ENCODE measurements at regions of chr22 and their contacts with region 1.

Region 1: DNA sequence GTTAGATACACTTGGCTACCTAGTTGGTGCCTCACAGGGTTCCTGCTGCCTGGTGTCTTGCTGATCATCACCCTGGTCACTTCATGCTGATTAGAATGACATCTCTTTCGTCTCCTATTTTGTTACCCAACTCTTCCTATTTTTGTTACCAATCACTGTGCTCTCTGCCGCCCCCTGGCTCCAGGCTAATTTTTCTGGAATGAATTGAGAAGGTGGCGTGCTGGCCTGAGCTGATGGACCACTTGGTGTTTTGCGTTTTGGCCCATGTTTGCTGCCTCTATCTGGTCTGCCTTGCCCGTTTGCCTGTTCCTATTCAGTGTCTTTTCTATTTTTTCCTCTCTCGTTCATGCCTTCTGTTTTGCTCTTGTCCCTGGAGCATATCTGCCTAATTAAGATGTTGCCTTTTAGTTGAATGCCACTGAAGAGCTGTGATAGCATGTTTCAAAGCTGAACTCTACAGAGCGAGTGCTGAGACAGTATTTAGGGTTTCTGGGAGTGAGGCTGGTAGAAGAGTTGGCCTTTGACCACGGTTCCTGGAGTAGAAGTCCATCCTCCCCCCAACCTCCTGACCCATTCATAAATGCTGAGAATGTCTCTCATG is 5.9 kb upstream of the ATF4 start:
- DNase-seq: peak in 2 of 5 donors; percentile 42 to 65
- H3K4me3 ChIP-seq: no peak overlapping the region
- H3K4me3 Mint-ChIP-seq: peak overlapping the region in 1 of 7 donors; percentile 4
- H3K27ac ChIP-seq: no peak overlapping the region
- H3K27ac Mint-ChIP-seq: peak overlapping the region in 4 of 8 donors; percentile 25 to 58 (median 37)
- H3K4me1 ChIP-seq: peaks cover 7% of the 10 kb centered on the region
- H3K4me1 Mint-ChIP-seq: peaks cover 17 to 26% (median 21%) of the 10 kb centered on the region in 3 donors
- H3K27me3 ChIP-seq: no peaks in the 10 kb centered on the region
- H3K27me3 Mint-ChIP-seq: peaks cover 0 to 2% of the 10 kb centered on the region in 2 donors

Region 2: GRCh38 chr22:39496131-39496838 is 18.2 kb before region 1 on chr22:
- CTCF ChIA-PET with region 1: interaction called, 51 read pairs
- POLR2A ChIA-PET with region 1: interaction called, 16 read pairs
- DNase-seq: peak in 3 of 5 donors; percentile 16 to 59 (median 36)
- H3K4me3 ChIP-seq: no peak overlapping the region
- H3K4me3 Mint-ChIP-seq: peak overlapping the region in 1 of 7 donors; percentile 64
- H3K27ac ChIP-seq: no peak overlapping the region
- H3K27ac Mint-ChIP-seq: no peak overlapping the region
- H3K4me1 ChIP-seq: peaks cover 6% of the 10 kb centered on the region
- H3K4me1 Mint-ChIP-seq: no peaks in the 10 kb centered on the region
- H3K27me3 ChIP-seq: no peaks in the 10 kb centered on the region
- H3K27me3 Mint-ChIP-seq: no peaks in the 10 kb centered on the region

Measured in CD8-positive, alpha-beta memory T cell (primary cell).